ENCODE measurements at regions of chr1 and their contacts with region 1.

Region 1: GRCh38 chr1:26233903-26234643 is at the start of gene CEP85:
- DNase-seq: peak; percentile 99
- ATAC-seq: peak; percentile 93
- H3K4me3 ChIP-seq: peak within 1 kb of the TSS; percentile 96
- H3K27ac ChIP-seq: peak within 1 kb of the TSS; percentile 48
- H3K4me1 ChIP-seq: peaks cover 25% of the 10 kb centered on the region
- H3K27me3 ChIP-seq: no peaks in the 10 kb centered on the region
- CTCF ChIP-seq: peak; percentile 85
- total RNA-seq, gene CEP85: 30.6 and 30.8 TPM in 2 replicates

Region 2: DNA sequence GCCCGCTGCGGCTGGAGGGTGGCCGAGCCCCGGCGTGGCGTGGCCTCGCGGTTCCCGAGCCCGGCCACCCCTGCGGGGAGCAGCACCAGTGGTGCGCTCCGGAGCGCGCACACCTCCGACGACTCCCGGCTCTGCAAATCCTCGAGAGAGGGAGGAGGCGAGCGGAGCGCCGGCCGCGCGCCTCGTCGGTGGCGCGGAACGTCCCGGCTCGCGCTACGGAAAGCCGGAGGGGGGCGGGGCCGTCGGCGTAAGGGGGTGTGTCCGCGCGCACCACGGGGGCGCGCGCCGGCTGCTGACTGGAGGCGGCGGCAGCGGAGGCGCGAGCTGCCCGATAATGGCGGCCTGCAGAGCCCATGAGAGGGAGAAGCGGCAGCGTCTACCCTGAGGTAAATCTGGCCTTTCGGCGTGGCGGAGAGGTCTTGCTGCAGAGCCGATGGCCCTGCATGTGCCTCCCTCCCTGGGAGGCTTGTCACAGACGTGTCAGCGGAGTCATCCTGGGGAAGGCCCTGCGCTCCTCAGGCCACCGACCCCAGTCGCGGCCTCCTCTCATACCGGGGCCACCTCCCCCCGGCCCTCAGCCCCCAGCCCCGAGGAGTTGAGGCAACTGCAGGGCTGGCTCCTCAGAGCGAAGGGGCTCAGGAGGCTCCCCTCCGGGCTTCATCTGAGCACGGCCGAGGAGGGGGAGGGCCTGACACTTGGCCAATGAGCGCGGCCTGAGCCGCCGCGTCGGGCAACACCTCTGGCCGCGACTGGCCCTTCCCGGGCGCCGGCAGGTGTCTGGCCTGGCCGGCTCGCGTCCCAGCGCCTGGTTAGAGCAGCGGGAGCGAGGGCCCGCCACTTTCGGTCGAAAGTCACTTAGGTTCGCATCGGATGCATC is 122.3 kb before region 1 on chr1 and contains the start of gene PDIK1L:
- CTCF ChIA-PET with region 1: interaction called, 4 read pairs
- POLR2A ChIA-PET with region 1: no interaction called
- intact Hi-C with region 1: loop called (anchors 2 kb)
- DNase-seq: peak; percentile 96
- ATAC-seq: peak; percentile 77
- H3K4me3 ChIP-seq: peak within 1 kb of the TSS; percentile 97
- H3K27ac ChIP-seq: peak within 1 kb of the TSS; percentile 80
- H3K4me1 ChIP-seq: peaks cover 18% of the 10 kb centered on the region
- H3K27me3 ChIP-seq: no peaks in the 10 kb centered on the region
- CTCF ChIP-seq: no peak
- total RNA-seq, gene PDIK1L: 4.1 and 5.2 TPM in 2 replicates

Region 3: GRCh38 chr1:26169669-26170471 is 64.2 kb before region 1 on chr1 and contains the start of gene ZNF593:
- CTCF ChIA-PET with region 1: interaction called, 23 read pairs
- POLR2A ChIA-PET with region 1: no interaction called
- intact Hi-C with region 1: loop called (anchors 2 kb)
- DNase-seq: peak; percentile 92
- ATAC-seq: peak; percentile 95
- H3K4me3 ChIP-seq: peak within 1 kb of the TSS; percentile 98
- H3K27ac ChIP-seq: peak within 1 kb of the TSS; percentile 72
- H3K4me1 ChIP-seq: peaks cover 11% of the 10 kb centered on the region
- H3K27me3 ChIP-seq: no peaks in the 10 kb centered on the region
- CTCF ChIP-seq: peak; percentile 81
- total RNA-seq, gene ZNF593: 155 and 165 TPM in 2 replicates

Region 4: DNA sequence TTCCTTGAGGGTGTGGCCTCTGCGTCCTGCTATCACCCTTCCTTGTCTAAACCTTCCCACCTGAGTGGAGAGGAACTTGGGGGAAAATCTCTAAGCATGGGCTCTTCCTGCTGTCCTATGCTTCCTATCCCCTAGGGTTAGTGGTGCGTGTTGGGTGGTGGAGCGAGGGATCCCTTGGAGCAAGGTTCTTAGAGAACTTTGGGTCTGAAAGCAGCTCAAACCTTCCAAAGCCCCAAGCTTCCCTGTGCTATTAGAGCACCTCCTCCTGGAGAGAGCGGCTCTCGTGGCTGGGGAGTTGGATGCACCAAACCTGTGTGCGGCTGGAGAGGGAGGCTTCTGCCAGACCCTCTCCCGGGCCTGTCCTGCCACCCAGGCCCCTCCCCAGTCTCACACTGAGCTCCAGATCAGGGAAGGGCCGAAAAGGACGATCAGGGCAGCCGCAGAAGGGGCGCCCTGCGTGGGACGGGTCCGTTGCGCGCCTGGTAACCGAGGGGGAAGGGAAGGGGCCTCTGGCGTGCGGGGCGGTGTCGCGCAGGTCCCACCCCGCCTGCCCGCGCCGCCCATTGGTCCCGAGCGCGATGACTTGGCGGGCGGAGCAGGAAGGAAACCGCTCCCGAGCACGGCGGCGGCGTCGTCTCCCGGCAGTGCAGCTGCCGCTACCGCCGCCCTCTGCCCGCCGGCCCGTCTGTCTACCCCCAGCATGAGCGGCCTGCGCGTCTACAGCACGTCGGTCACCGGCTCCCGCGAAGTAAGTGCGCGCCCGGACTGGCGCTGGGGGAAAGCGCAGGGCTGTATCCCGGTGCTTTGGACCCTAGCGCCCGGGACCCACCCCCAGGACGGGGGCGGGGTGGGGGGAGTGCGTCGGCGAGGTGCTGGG is 45.6 kb after region 1 on chr1 and contains the start of gene SH3BGRL3:
- CTCF ChIA-PET with region 1: interaction called, 6 read pairs
- POLR2A ChIA-PET with region 1: no interaction called
- intact Hi-C with region 1: loop called (anchors 1 kb)
- DNase-seq: peak; percentile 87
- ATAC-seq: peak; percentile 38
- H3K4me3 ChIP-seq: peak within 1 kb of the TSS; percentile 75
- H3K27ac ChIP-seq: peak within 1 kb of the TSS; percentile 99
- H3K4me1 ChIP-seq: peaks cover 84% of the 10 kb centered on the region
- H3K27me3 ChIP-seq: no peaks in the 10 kb centered on the region
- CTCF ChIP-seq: peak; percentile 56
- total RNA-seq, gene SH3BGRL3: 181 and 193 TPM in 2 replicates

Measured in PC-3 (cell line).